Activated T-helper 1 cell treated with anti-CD3 and anti-CD28 coated beads, Interleukin-12 subunit alpha, Interleukin-12 subunit beta, Interleukin-2, Interleukin-4 antibody, amounts not matched to agents 30 ng/mL and 10 ng/mL and 1 ng/mL, durations not matched to agents 14 hours and 24 hours and 36 hours (primary cell): ENCODE measurements at regions of chr18 and their contacts with region 1.

Region 1: DNA sequence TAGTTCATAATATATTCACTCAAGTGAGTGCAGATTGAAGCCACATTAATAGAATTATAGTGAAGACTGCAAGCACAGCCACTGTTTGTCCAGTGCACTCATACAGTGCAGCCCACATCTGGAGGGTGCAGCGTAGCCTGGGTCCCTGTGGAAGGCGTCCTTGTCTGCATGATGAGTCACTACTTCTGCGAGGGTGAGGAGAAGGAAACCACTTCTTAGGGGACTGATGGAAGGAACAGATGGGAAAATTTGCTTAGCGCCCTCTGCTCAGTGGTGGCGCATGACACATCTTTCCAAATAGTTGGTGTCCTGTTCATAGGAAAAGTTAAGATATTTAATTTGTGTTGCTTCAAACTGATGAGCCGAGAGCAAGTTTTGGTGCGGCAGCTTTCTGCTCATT is 330.4 kb upstream of the SMIM21 start:
- DNase-seq: no peak
- H3K4me3 Mint-ChIP-seq: no peak overlapping the region
- H3K27ac Mint-ChIP-seq: no peak overlapping the region
- H3K4me1 Mint-ChIP-seq: no peaks in the 10 kb centered on the region
- H3K27me3 Mint-ChIP-seq: peaks cover 4% of the 10 kb centered on the region

Region 2: GRCh38 chr18:76564127-76564526 is 806.2 kb after region 1 on chr18:
- intact Hi-C with region 1: loop called (anchors 5 kb)
- DNase-seq: no peak
- H3K4me3 Mint-ChIP-seq: no peak overlapping the region
- H3K27ac Mint-ChIP-seq: no peak overlapping the region
- H3K4me1 Mint-ChIP-seq: no peaks in the 10 kb centered on the region
- H3K27me3 Mint-ChIP-seq: peaks cover 10% of the 10 kb centered on the region